Panc1 (cell line): ENCODE measurements at regions of chr12 and their contacts with region 1.

Region 1: DNA sequence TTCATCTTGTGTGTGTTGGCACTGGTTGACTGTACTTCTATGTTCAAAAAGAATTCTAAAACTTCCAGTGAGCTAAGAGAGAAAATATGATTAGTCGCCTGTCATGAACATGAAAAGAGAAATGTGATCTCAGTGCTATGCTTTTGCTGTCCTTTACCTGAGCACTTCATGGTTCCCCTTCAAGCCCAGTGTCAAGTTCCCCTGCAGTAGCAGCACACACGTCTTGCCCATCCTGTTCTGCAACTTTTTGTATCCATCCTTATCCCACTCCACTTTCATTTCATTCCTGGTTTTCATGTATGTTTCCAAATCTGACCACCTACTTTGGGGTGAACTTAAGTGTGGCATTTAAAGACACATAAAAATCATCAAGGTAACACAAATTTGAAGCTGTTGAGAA is 848.0 kb upstream of the USP15 start:
- DNase-seq: no peak
- ATAC-seq: no peak
- H3K4me3 ChIP-seq: no peak overlapping the region
- H3K27ac ChIP-seq: no peak overlapping the region
- H3K4me1 ChIP-seq: no peaks in the 10 kb centered on the region
- H3K27me3 ChIP-seq: no peaks in the 10 kb centered on the region
- CTCF ChIP-seq: no peak

Region 2: DNA sequence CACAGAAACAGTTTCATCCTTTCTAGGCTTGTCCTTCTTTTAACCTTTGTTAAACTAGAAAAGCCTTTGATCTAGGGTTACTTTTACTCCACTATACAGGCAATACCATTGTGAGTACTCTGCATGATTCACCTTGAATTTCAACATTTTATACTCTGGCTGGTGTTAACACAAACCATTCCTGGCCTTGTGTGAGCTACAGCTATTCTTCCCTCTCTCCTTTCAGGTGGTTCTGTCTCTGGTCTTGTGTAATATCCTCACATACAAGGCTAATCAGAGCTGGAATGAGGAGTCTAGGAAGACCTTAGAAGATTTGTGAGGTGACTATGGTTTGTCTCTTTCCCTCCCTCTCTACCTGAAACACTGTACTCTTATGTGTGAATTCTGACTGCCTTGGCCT is 10.6 kb after region 1 on chr12:
- CTCF ChIA-PET with region 1: interaction called, 11 read pairs
- POLR2A ChIA-PET with region 1: no interaction called
- in situ Hi-C with region 1: no loop called
- intact Hi-C with region 1: no loop called
- DNase-seq: no peak
- ATAC-seq: no peak
- H3K4me3 ChIP-seq: no peak overlapping the region
- H3K27ac ChIP-seq: no peak overlapping the region
- H3K4me1 ChIP-seq: no peaks in the 10 kb centered on the region
- H3K27me3 ChIP-seq: no peaks in the 10 kb centered on the region
- CTCF ChIP-seq: no peak